ENCODE measurements at regions of chr11 and their contacts with region 1.

Region 1: GRCh38 chr11:14320020-14320419 is 39.0 kb downstream of the RRAS2 start:
- DNase-seq: peak; percentile 58
- ATAC-seq: peak; percentile 28
- H3K4me3 ChIP-seq: peak overlapping the region in 3 of 5 experiments; percentile 12 to 36 (median 26)
- H3K4me3 Mint-ChIP-seq: peak overlapping the region; percentile 59
- H3K27ac ChIP-seq: peak overlapping the region; percentile 53 to 77
- H3K27ac Mint-ChIP-seq: peak overlapping the region; percentile 75
- H3K4me1 ChIP-seq: peaks cover 81 to 95% of the 10 kb centered on the region in 2 donors
- H3K4me1 Mint-ChIP-seq: peaks cover 88% of the 10 kb centered on the region
- H3K27me3 ChIP-seq: no peaks in the 10 kb centered on the region
- H3K27me3 Mint-ChIP-seq: no peaks in the 10 kb centered on the region
- CTCF ChIP-seq: no peak

Region 2: GRCh38 chr11:14237444-14237961 is 82.5 kb before region 1 on chr11:
- CTCF ChIA-PET with region 1: no interaction called
- POLR2A ChIA-PET with region 1: no interaction called
- intact Hi-C with region 1: loop called (anchors 2 kb)
- DNase-seq: peak; percentile 92
- ATAC-seq: peak; percentile 97
- H3K4me3 ChIP-seq: peak overlapping the region in 1 of 5 experiments; percentile 22
- H3K4me3 Mint-ChIP-seq: peak overlapping the region; percentile 70
- H3K27ac ChIP-seq: peak overlapping the region; percentile 62 to 73
- H3K27ac Mint-ChIP-seq: peak overlapping the region; percentile 84
- H3K4me1 ChIP-seq: peaks cover 32 to 34% of the 10 kb centered on the region in 2 donors
- H3K4me1 Mint-ChIP-seq: peaks cover 38% of the 10 kb centered on the region
- H3K27me3 ChIP-seq: no peaks in the 10 kb centered on the region
- H3K27me3 Mint-ChIP-seq: peaks cover 7% of the 10 kb centered on the region
- CTCF ChIP-seq: no peak

Region 3: GRCh38 chr11:14331476-14332136 is 11.6 kb after region 1 on chr11:
- CTCF ChIA-PET with region 1: interaction called, 7 read pairs
- POLR2A ChIA-PET with region 1: interaction called, 5 read pairs
- intact Hi-C with region 1: loop called (anchors 2 kb)
- DNase-seq: peak; percentile 70
- ATAC-seq: peak; percentile 75
- H3K4me3 ChIP-seq: peak overlapping the region in 1 of 5 experiments; percentile 13
- H3K4me3 Mint-ChIP-seq: peak overlapping the region; percentile 70
- H3K27ac ChIP-seq: peak overlapping the region; percentile 53 to 74
- H3K27ac Mint-ChIP-seq: peak overlapping the region; percentile 79
- H3K4me1 ChIP-seq: peaks cover 66 to 75% of the 10 kb centered on the region in 2 donors
- H3K4me1 Mint-ChIP-seq: peaks cover 72% of the 10 kb centered on the region
- H3K27me3 ChIP-seq: no peaks in the 10 kb centered on the region
- H3K27me3 Mint-ChIP-seq: no peaks in the 10 kb centered on the region
- CTCF ChIP-seq: no peak

Region 4: DNA sequence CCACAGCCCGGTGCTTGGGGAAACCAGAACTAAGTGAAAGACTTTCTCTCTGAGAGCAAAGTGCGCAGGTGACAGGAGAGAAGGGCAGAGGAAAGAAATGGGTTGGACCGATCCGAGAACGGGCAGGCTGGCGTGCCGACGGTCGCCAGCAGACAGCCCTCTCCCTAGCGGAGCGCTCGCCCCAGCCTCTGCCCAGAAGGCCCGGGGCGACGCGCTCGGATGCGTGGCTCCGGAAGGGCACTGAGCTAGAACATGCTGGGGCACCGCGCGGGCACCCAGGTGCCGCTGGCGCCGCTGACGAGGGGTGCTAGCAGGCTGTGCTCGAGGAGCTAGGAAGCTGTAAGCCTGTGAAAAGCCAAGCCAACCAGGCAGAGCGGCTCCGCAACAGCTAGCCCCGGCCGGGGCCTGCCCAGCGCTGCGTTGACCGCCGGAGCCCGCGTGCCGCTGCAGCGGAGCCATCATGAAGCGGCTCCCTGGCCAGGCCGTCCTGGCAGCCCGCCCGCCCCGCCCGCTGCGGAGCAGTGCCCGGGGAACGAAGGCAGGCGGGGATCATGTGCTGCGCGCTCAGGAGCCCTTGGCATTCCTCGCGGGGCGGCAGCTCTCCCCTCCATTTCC is 61.0 kb after region 1 on chr11:
- CTCF ChIA-PET with region 1: interaction called, 5 read pairs
- POLR2A ChIA-PET with region 1: no interaction called
- intact Hi-C with region 1: loop called (anchors 2 kb)
- DNase-seq: peak; percentile 85
- ATAC-seq: peak; percentile 96
- H3K4me3 ChIP-seq: peak overlapping the region in 4 of 5 experiments; percentile 47 to 69 (median 62)
- H3K4me3 Mint-ChIP-seq: peak overlapping the region; percentile 89
- H3K27ac ChIP-seq: peak overlapping the region; percentile 36 to 56
- H3K27ac Mint-ChIP-seq: peak overlapping the region; percentile 73
- H3K4me1 ChIP-seq: peaks cover 12 to 14% of the 10 kb centered on the region in 2 donors
- H3K4me1 Mint-ChIP-seq: peaks cover 19% of the 10 kb centered on the region
- H3K27me3 ChIP-seq: peaks cover 0 to 3% (median 0%) of the 10 kb centered on the region in 4 experiments
- H3K27me3 Mint-ChIP-seq: peaks cover 6% of the 10 kb centered on the region
- CTCF ChIP-seq: no peak

Region 5: GRCh38 chr11:14445542-14446530 is 125.8 kb after region 1 on chr11:
- CTCF ChIA-PET with region 1: no interaction called
- POLR2A ChIA-PET with region 1: interaction called, 10 read pairs
- intact Hi-C with region 1: no loop called
- DNase-seq: no peak
- ATAC-seq: no peak
- H3K4me3 ChIP-seq: no peak overlapping the region
- H3K4me3 Mint-ChIP-seq: peak overlapping the region; percentile 12
- H3K27ac ChIP-seq: no peak overlapping the region
- H3K27ac Mint-ChIP-seq: no peak overlapping the region
- H3K4me1 ChIP-seq: peaks cover 10 to 12% of the 10 kb centered on the region in 2 donors
- H3K4me1 Mint-ChIP-seq: peaks cover 30% of the 10 kb centered on the region
- H3K27me3 ChIP-seq: no peaks in the 10 kb centered on the region
- H3K27me3 Mint-ChIP-seq: no peaks in the 10 kb centered on the region
- CTCF ChIP-seq: no peak